ENCODE measurements at regions of chr9 and their contacts with region 1.

Region 1: GRCh38 chr9:75918154-75918553 is 27.7 kb downstream of the PCSK5 start:
- DNase-seq: no peak
- H3K4me3 Mint-ChIP-seq: no peak overlapping the region
- H3K27ac Mint-ChIP-seq: no peak overlapping the region
- H3K4me1 Mint-ChIP-seq: no peaks in the 10 kb centered on the region
- H3K27me3 Mint-ChIP-seq: no peaks in the 10 kb centered on the region

Region 2: DNA sequence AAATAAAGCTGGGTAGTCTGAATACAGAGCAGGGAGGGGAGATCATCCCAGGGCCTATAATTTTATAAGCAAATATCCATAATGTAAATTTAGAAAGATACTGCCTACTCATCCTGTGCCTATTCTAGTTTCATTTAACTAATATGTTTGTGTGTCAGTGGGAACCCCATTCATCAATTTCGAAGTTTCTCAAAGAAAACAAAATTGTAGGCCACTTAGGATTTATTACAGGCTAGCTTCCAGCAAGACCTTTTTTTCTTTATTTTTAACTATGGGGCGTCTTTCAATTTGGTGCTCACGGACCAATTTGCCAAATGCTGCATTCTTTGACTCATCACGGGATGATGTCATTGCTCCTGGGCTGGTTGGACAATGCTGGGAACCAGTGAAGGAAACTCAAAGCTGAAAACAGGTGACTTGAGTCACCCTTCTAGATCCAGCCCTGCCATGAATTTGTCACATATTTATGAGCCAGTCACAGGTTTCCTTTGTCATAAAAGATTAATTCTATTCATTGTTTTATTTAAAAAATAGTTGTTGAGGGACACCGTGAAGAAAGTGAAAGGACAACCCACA is 14.3 kb before region 1 on chr9:
- intact Hi-C with region 1: loop called (anchors 1 kb)
- DNase-seq: no peak
- H3K4me3 Mint-ChIP-seq: no peak overlapping the region
- H3K27ac Mint-ChIP-seq: no peak overlapping the region
- H3K4me1 Mint-ChIP-seq: no peaks in the 10 kb centered on the region
- H3K27me3 Mint-ChIP-seq: no peaks in the 10 kb centered on the region

Region 3: GRCh38 chr9:75930730-75931321 is 12.7 kb after region 1 on chr9:
- intact Hi-C with region 1: no loop called
- DNase-seq: no peak
- H3K4me3 Mint-ChIP-seq: no peak overlapping the region
- H3K27ac Mint-ChIP-seq: no peak overlapping the region
- H3K4me1 Mint-ChIP-seq: no peaks in the 10 kb centered on the region
- H3K27me3 Mint-ChIP-seq: no peaks in the 10 kb centered on the region

Region 4: GRCh38 chr9:76213751-76214150 is 295.6 kb after region 1 on chr9:
- intact Hi-C with region 1: no loop called
- DNase-seq: no peak
- H3K4me3 Mint-ChIP-seq: no peak overlapping the region
- H3K27ac Mint-ChIP-seq: no peak overlapping the region
- H3K4me1 Mint-ChIP-seq: no peaks in the 10 kb centered on the region
- H3K27me3 Mint-ChIP-seq: peaks cover 10% of the 10 kb centered on the region

Measured in activated T-helper 1 cell treated with anti-CD3 and anti-CD28 coated beads, Interleukin-12 subunit alpha, Interleukin-12 subunit beta, Interleukin-2, Interleukin-4 antibody, amounts not matched to agents 30 ng/mL and 10 ng/mL and 1 ng/mL, durations not matched to agents 14 hours and 24 hours and 36 hours (primary cell).